IMR-90 (cell line): ENCODE measurements at regions of chr12 and their contacts with region 1.

Region 1: GRCh38 chr12:63276537-63277365 is 125.8 kb upstream of the AVPR1A start:
- DNase-seq: peak; percentile 4
- ATAC-seq: no peak; the same call in 1 of the 2 replicates
- H3K4me3 ChIP-seq: no peak overlapping the region
- H3K27ac ChIP-seq: no peak overlapping the region
- H3K4me1 ChIP-seq: no peaks in the 10 kb centered on the region
- H3K27me3 ChIP-seq: no peaks in the 10 kb centered on the region
- CTCF ChIP-seq: peak; percentile 46
- POLR2A ChIP-seq: no peak
- RAD21 ChIP-seq: peak; percentile 31

Region 2: GRCh38 chr12:62785941-62786559 is 490.7 kb before region 1 on chr12:
- CTCF ChIA-PET with region 1: no interaction called
- POLR2A ChIA-PET with region 1: no interaction called
- dilution Hi-C with region 1: no loop called
- in situ Hi-C with region 1: no loop called
- intact Hi-C with region 1: no loop called
- DNase-seq: peak; percentile 93
- ATAC-seq: peak; percentile 79
- H3K4me3 ChIP-seq: no peak overlapping the region
- H3K27ac ChIP-seq: peak overlapping the region; percentile 55; the same call in 1 of the 2 replicates
- H3K4me1 ChIP-seq: peaks cover 7% of the 10 kb centered on the region
- H3K27me3 ChIP-seq: no peaks in the 10 kb centered on the region
- CTCF ChIP-seq: no peak
- POLR2A ChIP-seq: no peak
- RAD21 ChIP-seq: 0 out of 2 replicates have a peak, but pooled peaks have one; percentile 2

Region 3: DNA sequence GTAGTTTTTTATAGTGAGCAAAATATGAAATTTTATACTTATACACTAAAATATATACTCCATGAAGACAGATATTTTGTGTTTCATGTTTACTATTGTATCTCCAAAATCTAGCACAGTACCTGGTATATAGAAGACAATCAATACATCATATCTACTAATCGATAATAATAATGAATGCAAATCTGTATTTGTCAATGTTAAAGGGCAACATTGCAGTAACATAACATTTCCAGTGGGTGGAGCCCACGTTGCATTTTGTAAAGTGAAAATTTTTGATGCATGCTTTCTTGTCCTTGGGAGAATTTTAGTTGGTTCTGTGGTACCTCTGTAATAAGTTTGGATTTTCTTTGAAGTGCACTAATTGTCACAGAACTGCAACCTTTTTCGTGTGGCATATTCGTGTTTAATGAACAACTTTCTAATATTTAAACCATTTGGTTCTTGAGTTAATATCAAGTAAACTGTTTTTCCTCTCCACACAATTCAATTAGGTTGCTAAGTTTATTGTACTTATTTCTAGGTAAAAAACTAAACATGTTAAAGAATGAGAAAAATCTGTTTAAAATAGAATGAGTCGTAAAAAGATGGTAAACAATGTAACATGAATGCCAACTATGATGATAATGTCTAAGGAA is 173.1 kb before region 1 on chr12:
- CTCF ChIA-PET with region 1: no interaction called
- POLR2A ChIA-PET with region 1: no interaction called
- dilution Hi-C with region 1: no loop called
- in situ Hi-C with region 1: no loop called
- intact Hi-C with region 1: loop called (anchors 2 kb)
- DNase-seq: peak; percentile 23
- ATAC-seq: no peak; the same call in 1 of the 2 replicates
- H3K4me3 ChIP-seq: no peak overlapping the region
- H3K27ac ChIP-seq: no peak overlapping the region
- H3K4me1 ChIP-seq: no peaks in the 10 kb centered on the region
- H3K27me3 ChIP-seq: no peaks in the 10 kb centered on the region
- CTCF ChIP-seq: peak; percentile 61
- POLR2A ChIP-seq: no peak
- RAD21 ChIP-seq: peak; percentile 61

Region 4: GRCh38 chr12:63294327-63294632 is 17.5 kb after region 1 on chr12:
- CTCF ChIA-PET with region 1: no interaction called
- POLR2A ChIA-PET with region 1: no interaction called
- dilution Hi-C with region 1: no loop called
- in situ Hi-C with region 1: no loop called
- intact Hi-C with region 1: no loop called
- DNase-seq: peak; percentile 66
- ATAC-seq: peak; percentile 78
- H3K4me3 ChIP-seq: no peak overlapping the region
- H3K27ac ChIP-seq: no peak overlapping the region
- H3K4me1 ChIP-seq: no peaks in the 10 kb centered on the region
- H3K27me3 ChIP-seq: no peaks in the 10 kb centered on the region
- CTCF ChIP-seq: no peak
- POLR2A ChIP-seq: no peak
- RAD21 ChIP-seq: no peak